GM12878 (cell line): ENCODE measurements at regions of chr16 and their contacts with region 1.

Region 1: DNA sequence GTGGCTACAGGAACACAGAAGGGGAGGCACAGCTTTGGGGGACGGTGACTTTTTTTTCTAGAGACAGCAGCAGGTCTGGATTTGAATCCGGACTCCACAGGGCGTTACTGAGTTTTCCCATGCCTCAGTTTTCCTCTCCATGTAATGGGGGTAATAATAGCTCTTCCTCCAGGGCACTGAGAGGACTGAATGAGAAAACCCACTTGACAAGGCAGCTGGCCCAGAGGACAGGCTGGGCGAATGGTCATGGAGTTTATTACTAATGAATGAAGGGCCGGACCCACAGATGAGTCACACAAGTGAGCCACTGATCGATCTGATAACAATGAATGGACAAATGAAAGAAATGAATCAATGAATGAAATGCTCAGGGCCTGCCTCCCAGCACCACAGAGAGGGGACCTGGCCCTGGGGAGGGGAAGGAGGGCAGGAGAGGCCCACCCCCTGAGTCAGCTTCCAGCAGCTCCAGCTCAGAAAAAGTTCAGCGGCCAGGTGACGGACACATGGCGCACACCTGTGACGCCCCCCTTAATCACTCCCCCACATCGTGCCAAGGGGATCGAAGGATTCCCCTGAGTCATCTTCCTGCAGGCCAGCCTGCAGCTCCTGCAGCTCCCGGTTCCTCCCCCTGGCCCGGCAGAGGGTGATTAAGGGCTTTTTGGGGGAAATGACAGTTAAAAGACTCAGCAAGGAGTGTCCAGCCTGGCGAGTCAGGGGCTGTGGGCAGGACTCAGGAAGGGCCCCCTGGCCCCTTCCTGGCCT is 54.3 kb downstream of the SOCS1 start:
- DNase-seq: no peak
- ATAC-seq: peak; percentile 5
- H3K4me3 ChIP-seq: no peak overlapping the region
- H3K27ac ChIP-seq: peak overlapping the region; percentile 45
- H3K4me1 ChIP-seq: peaks cover 67% of the 10 kb centered on the region
- H3K27me3 ChIP-seq: no peaks in the 10 kb centered on the region
- CTCF ChIP-seq: no peak
- EP300 ChIP-seq: peak in 1 of 2 experiments; percentile 28; a peak in 1 of 4 replicates
- POLR2A ChIP-seq: no peak
- RAD21 ChIP-seq: no peak

Region 2: GRCh38 chr16:11125936-11126335 is 75.7 kb before region 1 on chr16:
- CTCF ChIA-PET with region 1: no interaction called
- POLR2A ChIA-PET with region 1: no interaction called
- RAD21 ChIA-PET with region 1: no interaction called
- SMC1A ChIA-PET with region 1: no interaction called
- in situ Hi-C with region 1: no loop called
- intact Hi-C with region 1: no loop called
- DNase-seq: no peak
- ATAC-seq: no peak
- H3K4me3 ChIP-seq: no peak overlapping the region
- H3K27ac ChIP-seq: no peak overlapping the region
- H3K4me1 ChIP-seq: peaks cover 11% of the 10 kb centered on the region
- H3K27me3 ChIP-seq: no peaks in the 10 kb centered on the region
- CTCF ChIP-seq: no peak
- EP300 ChIP-seq: no peak
- POLR2A ChIP-seq: no peak
- RAD21 ChIP-seq: no peak

Region 3: GRCh38 chr16:11190588-11191560 is 10.8 kb before region 1 on chr16:
- CTCF ChIA-PET with region 1: interaction called, 3 read pairs
- POLR2A ChIA-PET with region 1: interaction called, 48 read pairs
- RAD21 ChIA-PET with region 1: interaction called, 86 read pairs
- SMC1A ChIA-PET with region 1: interaction called, 35 read pairs
- in situ Hi-C with region 1: no loop called
- intact Hi-C with region 1: no loop called
- DNase-seq: no peak
- ATAC-seq: peak; percentile 41; the same call in 2 of the 3 replicates
- H3K4me3 ChIP-seq: no peak overlapping the region
- H3K27ac ChIP-seq: no peak overlapping the region
- H3K4me1 ChIP-seq: peaks cover 13% of the 10 kb centered on the region
- H3K27me3 ChIP-seq: no peaks in the 10 kb centered on the region
- CTCF ChIP-seq: no peak
- EP300 ChIP-seq: no peak
- POLR2A ChIP-seq: no peak
- RAD21 ChIP-seq: no peak

Region 4: GRCh38 chr16:11218604-11218962 is 16.9 kb after region 1 on chr16:
- CTCF ChIA-PET with region 1: interaction called, 13 read pairs
- POLR2A ChIA-PET with region 1: interaction called, 32 read pairs
- RAD21 ChIA-PET with region 1: interaction called, 59 read pairs
- SMC1A ChIA-PET with region 1: interaction called, 23 read pairs
- in situ Hi-C with region 1: no loop called
- intact Hi-C with region 1: no loop called
- DNase-seq: no peak
- ATAC-seq: no peak
- H3K4me3 ChIP-seq: no peak overlapping the region
- H3K27ac ChIP-seq: no peak overlapping the region
- H3K4me1 ChIP-seq: peaks cover 1% of the 10 kb centered on the region; the same call in 1 of the 2 replicates
- H3K27me3 ChIP-seq: no peaks in the 10 kb centered on the region
- CTCF ChIP-seq: peak in 2 of 3 experiments; percentile 54 to 55; a peak in 4 of 6 replicates
- EP300 ChIP-seq: no peak
- POLR2A ChIP-seq: no peak
- RAD21 ChIP-seq: no peak